WTC11 (cell line): ENCODE measurements at regions of chr7 and their contacts with region 1.

Region 1: GRCh38 chr7:129091484-129092002 is 36.6 kb upstream of the TNPO3 start:
- DNase-seq: peak; percentile 98
- ATAC-seq: peak; percentile 98
- H3K4me3 Mint-ChIP-seq: no peak overlapping the region
- H3K27ac Mint-ChIP-seq: no peak overlapping the region
- H3K4me1 Mint-ChIP-seq: peaks cover 8% of the 10 kb centered on the region
- H3K27me3 Mint-ChIP-seq: no peaks in the 10 kb centered on the region
- CTCF ChIP-seq: peak; percentile 93

Region 2: DNA sequence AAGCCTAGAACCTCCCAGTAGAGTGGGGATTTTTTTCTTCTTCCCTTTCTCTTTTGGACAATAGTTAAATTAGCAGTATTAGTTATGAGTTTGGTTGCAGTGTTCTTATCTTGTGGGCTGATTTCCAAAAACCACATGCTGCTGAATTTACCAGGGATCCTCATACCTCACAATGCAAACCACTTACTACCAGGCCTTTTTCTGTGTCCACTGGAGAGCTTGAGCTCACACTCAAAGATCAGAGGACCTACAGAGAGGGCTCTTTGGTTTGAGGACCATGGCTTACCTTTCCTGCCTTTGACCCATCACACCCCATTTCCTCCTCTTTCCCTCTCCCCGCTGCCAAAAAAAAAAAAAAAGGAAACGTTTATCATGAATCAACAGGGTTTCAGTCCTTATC is 321.3 kb before region 1 on chr7:
- CTCF ChIA-PET with region 1: no interaction called
- POLR2A ChIA-PET with region 1: no interaction called
- DNase-seq: no peak
- ATAC-seq: no peak
- H3K4me3 Mint-ChIP-seq: no peak overlapping the region
- H3K27ac Mint-ChIP-seq: no peak overlapping the region
- H3K4me1 Mint-ChIP-seq: no peaks in the 10 kb centered on the region
- H3K27me3 Mint-ChIP-seq: no peaks in the 10 kb centered on the region; the same call in 1 of the 2 replicates
- CTCF ChIP-seq: no peak

Region 3: DNA sequence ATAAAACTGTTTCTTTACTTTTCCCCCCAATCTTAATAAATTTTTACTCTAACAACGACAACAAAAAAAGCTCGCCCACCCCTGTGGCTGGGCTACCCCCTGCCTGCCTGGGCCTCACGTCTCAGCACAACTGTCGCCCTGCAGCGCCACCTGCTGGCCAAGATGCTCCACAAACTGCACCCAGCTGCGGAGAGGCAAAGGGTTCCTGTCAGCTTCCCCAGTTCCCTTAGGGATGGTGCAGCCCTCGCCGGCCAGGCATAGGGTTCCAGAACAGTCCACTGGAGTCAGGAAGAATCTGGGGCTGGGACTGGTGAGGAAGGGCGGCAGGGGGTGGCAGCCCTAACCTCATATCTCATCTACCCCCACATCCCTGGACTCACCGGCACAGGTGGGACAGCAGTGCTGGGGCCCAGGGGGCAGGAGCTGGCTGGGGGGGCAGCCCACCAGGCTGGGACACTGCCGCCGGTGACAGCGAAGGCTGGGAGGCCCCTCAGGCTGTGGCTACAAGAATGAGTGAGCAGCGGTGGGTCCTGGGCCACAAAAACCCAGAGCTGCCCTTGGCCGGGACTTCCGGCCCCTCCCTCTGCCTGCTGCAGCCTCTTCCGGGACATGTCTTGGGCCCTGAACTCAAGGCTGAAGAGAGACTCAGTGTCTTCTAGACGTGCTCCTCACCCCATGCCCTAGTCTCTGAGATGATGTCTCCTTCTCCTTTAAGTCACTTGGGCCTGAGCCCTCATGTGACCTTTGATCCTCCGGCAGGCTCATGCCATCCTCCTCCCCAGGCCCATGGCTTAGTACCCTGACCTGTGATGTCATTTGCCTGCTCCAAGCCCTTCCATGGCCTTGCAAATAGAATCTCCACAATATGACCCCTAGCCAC is 207.7 kb before region 1 on chr7:
- CTCF ChIA-PET with region 1: interaction called, 26 read pairs
- POLR2A ChIA-PET with region 1: no interaction called
- DNase-seq: peak; percentile 95
- ATAC-seq: peak; percentile 41
- H3K4me3 Mint-ChIP-seq: no peak overlapping the region
- H3K27ac Mint-ChIP-seq: no peak overlapping the region
- H3K4me1 Mint-ChIP-seq: peaks cover 5% of the 10 kb centered on the region; the same call in 1 of the 2 replicates
- H3K27me3 Mint-ChIP-seq: no peaks in the 10 kb centered on the region
- CTCF ChIP-seq: peak; percentile 91

Region 4: GRCh38 chr7:128946923-128947830 is 144.4 kb before region 1 on chr7:
- CTCF ChIA-PET with region 1: interaction called, 28 read pairs
- POLR2A ChIA-PET with region 1: interaction called, 3 read pairs
- DNase-seq: peak; percentile 65
- ATAC-seq: peak; percentile 82
- H3K4me3 Mint-ChIP-seq: no peak overlapping the region
- H3K27ac Mint-ChIP-seq: no peak overlapping the region
- H3K4me1 Mint-ChIP-seq: no peaks in the 10 kb centered on the region
- H3K27me3 Mint-ChIP-seq: no peaks in the 10 kb centered on the region; the same call in 1 of the 2 replicates
- CTCF ChIP-seq: 0 out of 2 replicates have a peak, but pooled peaks have one; percentile 15

Region 5: DNA sequence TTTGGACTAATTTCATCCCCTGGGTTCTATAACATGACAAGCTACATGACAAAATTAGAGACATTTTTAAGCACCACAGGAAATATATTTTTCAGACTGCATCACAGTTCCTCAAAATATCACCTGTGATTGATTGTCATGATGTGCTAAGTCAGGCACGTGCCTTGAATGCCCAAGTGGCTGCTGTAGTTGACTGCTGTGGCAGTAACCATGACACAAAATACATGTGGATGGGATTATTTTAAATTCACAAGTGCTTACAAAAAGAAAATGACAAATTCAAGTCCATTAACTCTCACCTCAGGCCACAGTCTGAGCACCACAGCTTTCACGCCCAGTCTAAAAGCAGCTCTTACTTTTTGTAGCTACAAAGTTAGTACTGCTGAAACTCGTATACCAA is 82.1 kb before region 1 on chr7:
- CTCF ChIA-PET with region 1: interaction called, 11 read pairs
- POLR2A ChIA-PET with region 1: no interaction called
- DNase-seq: no peak
- ATAC-seq: no peak
- H3K4me3 Mint-ChIP-seq: no peak overlapping the region
- H3K27ac Mint-ChIP-seq: no peak overlapping the region
- H3K4me1 Mint-ChIP-seq: no peaks in the 10 kb centered on the region
- H3K27me3 Mint-ChIP-seq: no peaks in the 10 kb centered on the region
- CTCF ChIP-seq: no peak

Region 6: DNA sequence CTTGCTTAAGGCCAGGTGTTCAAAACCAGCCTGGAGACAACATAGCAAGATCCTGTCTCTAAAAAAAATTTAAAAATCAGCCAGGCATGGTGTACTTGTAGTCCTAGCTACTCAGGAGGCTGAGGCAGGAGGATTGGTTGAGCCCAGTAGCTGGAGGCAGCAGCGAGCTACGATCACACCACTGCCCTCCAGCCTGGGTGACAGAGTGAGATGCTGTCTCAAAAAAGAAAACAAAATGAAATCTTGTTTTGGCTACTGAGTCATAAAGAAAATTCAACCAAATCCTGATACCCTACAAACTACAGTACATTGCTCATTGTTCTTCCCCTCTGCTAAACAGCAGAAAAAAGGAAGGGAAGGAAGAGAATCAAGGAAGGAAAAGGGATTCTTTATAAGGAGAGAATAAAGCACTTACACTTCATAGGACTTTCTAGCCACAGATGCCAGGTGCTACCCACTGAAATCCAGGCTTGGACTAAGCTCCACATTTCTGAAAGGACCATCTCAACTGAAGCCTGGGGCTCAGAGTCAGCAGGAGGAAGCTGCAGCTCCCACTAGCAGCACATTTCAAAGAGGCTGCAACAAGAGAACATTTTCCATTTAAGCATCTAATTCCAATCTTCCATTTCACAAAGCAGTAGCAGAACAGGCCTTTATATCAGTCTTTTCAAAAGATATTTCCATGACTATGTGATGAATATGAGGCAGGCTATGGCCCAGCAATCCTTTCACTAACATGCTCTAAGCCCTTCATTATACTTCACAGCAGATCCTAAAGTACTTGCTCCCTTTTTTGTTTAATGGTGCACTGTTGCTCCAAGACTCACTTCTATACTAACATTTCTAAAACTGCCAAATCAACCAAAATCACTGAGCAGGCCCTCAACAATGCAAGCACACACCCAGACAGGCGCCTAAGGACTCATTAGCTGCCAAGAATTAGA is 50.1 kb before region 1 on chr7:
- CTCF ChIA-PET with region 1: interaction called, 18 read pairs
- POLR2A ChIA-PET with region 1: no interaction called
- DNase-seq: no peak
- ATAC-seq: peak; percentile 55
- H3K4me3 Mint-ChIP-seq: no peak overlapping the region
- H3K27ac Mint-ChIP-seq: peak overlapping the region; percentile 74
- H3K4me1 Mint-ChIP-seq: peaks cover 36% of the 10 kb centered on the region
- H3K27me3 Mint-ChIP-seq: no peaks in the 10 kb centered on the region
- CTCF ChIP-seq: no peak

Region 7: DNA sequence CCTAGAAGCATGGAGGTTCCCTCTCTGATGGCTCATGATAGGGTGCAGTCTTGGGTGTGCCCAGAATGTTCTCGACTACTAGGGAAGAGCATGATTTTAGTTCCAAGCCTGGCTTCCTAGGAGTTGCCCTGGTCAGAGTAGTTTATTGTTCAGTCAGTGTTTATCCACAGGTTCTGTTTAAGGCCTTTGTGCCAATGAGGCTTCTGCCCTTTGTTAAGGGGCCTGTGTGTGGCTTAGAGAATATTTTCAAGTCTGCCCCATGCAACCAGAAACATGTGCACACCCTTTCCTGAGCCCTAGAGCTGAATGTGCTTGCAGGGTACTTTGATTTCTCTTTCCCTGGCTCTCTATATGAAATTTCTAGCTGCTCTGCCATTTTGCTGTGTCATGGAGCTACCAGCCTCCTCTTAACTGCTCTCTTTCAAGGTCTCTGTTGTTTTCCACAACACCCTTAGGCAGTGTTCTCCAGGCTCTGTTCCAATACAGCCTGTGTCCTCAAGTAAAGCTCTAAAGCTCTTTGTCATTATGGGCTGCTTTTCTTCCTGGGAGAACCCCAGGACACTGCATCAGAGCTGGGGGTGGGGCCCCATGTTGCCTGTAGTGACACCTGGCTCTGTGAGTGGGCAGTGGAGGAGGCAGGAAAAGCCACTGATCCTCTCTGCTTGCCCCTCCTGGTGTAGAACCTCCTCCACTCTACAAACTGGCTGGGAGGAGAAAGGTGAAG is 18.9 kb after region 1 on chr7:
- CTCF ChIA-PET with region 1: interaction called, 16 read pairs
- POLR2A ChIA-PET with region 1: no interaction called
- DNase-seq: peak; percentile 38
- ATAC-seq: peak; percentile 98
- H3K4me3 Mint-ChIP-seq: no peak overlapping the region
- H3K27ac Mint-ChIP-seq: peak overlapping the region; percentile 90
- H3K4me1 Mint-ChIP-seq: peaks cover 10% of the 10 kb centered on the region
- H3K27me3 Mint-ChIP-seq: no peaks in the 10 kb centered on the region
- CTCF ChIP-seq: no peak

Region 8: DNA sequence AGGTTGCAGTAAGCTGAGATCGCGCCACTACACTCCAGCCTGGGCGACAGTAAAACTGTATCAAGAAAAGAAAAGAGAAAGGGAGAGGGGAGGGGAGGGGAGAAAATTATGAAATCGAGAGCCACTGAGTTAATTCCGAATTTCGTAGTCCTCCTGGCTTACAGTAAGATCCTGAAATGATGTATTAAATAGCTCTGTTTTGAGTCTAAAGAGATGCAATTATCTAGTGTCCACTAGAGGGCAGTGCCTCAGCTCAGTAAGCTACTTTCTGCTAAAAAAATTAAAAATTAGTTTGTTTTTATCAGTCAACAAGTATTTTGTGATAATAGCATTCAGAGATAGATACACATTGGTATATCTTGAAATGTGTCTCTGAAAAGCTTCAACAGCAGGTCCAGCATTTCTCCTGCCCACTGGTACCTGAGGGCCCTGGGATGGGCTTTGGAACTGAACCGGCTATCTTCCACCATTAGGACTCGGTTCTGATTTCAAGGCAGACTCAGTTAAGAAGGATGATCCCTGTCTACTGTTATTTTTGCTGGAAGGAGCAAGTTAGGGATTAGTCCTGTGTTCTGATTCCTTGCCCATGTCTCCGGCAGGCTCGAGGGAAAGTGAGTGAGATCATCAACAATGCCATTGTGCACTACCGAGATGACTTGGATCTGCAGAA is 72.5 kb after region 1 on chr7:
- CTCF ChIA-PET with region 1: interaction called, 32 read pairs
- POLR2A ChIA-PET with region 1: no interaction called
- DNase-seq: no peak
- ATAC-seq: no peak
- H3K4me3 Mint-ChIP-seq: no peak overlapping the region
- H3K27ac Mint-ChIP-seq: no peak overlapping the region
- H3K4me1 Mint-ChIP-seq: peaks cover 17% of the 10 kb centered on the region
- H3K27me3 Mint-ChIP-seq: no peaks in the 10 kb centered on the region
- CTCF ChIP-seq: peak; percentile 67

Region 9: DNA sequence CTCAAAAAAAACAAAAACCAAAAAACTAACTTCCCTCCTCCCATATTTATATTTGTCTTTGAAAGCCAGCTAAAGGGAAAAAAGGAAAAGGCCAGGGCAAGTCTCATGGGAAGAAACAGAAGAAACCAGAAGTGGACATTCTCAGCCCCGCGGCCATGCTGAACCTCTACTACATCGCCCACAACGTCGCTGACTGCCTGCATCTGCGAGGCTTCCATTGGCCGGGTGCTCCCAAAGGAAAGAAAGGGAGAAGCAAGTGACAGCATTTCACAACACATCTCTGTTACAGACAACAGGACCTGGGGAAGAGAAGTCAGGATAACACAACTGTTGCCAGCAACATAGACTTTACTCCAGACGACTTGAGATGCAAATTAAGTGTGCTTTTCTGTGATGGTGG is 420.6 kb after region 1 on chr7:
- CTCF ChIA-PET with region 1: no interaction called
- POLR2A ChIA-PET with region 1: no interaction called
- DNase-seq: no peak
- ATAC-seq: no peak
- H3K4me3 Mint-ChIP-seq: no peak overlapping the region
- H3K27ac Mint-ChIP-seq: no peak overlapping the region
- H3K4me1 Mint-ChIP-seq: peaks cover 20% of the 10 kb centered on the region
- H3K27me3 Mint-ChIP-seq: no peaks in the 10 kb centered on the region
- CTCF ChIP-seq: no peak